OCI-LY7 (cell line): ENCODE measurements at regions of chr6 and their contacts with region 1.

Region 1: GRCh38 chr6:151753605-151754004 is 53.9 kb upstream of the ESR1 start:
- DNase-seq: no peak
- H3K4me3 ChIP-seq: no peak overlapping the region
- H3K27ac ChIP-seq: no peak overlapping the region
- H3K4me1 ChIP-seq: no peaks in the 10 kb centered on the region
- CTCF ChIP-seq: no peak

Region 2: DNA sequence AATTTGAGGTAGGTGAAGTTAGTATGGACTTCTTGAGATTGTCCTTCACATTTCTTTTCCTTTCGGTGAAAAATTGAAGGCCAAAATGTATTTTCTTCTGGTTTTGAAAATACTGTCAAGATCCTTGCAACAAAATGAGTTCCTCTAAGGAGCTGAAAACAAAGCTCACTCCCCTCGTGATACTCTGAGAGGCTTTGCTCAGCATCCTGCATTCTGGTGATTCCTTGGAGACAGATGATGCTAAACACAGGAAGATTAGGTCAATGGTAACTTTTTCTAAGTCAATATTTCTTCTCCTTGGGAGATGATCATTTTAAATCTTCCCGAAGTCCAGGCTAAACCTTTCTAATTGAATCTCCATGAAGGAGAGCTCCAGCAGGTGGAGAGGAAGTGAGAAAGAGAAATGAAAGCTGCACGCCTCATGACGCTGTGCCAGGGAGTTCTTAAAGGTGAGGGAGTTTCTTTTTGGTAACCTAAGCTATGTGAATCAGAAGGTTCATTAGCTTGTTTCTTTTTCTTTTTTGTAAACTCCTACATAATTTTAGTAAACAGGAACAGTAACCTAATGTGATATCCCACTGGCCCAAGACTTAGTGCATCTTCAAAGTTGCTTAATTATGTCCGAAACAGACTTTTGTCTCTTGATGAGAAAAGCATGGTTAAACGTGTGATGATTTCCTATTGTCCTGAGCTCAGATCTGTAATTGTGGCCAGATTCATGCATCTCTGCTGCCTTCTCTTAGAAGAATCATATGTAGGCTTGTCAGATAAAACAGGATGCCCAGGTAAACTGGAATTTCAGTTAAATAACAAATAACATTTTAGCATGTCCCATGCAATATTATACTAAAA is 68.9 kb after region 1 on chr6:
- CTCF ChIA-PET with region 1: interaction called, 15 read pairs
- POLR2A ChIA-PET with region 1: no interaction called
- intact Hi-C with region 1: no loop called
- DNase-seq: peak; percentile 19
- H3K4me3 ChIP-seq: no peak overlapping the region
- H3K27ac ChIP-seq: no peak overlapping the region
- H3K4me1 ChIP-seq: peaks cover 9% of the 10 kb centered on the region
- CTCF ChIP-seq: no peak